ENCODE measurements at regions of chr4 and their contacts with region 1.

Region 1: DNA sequence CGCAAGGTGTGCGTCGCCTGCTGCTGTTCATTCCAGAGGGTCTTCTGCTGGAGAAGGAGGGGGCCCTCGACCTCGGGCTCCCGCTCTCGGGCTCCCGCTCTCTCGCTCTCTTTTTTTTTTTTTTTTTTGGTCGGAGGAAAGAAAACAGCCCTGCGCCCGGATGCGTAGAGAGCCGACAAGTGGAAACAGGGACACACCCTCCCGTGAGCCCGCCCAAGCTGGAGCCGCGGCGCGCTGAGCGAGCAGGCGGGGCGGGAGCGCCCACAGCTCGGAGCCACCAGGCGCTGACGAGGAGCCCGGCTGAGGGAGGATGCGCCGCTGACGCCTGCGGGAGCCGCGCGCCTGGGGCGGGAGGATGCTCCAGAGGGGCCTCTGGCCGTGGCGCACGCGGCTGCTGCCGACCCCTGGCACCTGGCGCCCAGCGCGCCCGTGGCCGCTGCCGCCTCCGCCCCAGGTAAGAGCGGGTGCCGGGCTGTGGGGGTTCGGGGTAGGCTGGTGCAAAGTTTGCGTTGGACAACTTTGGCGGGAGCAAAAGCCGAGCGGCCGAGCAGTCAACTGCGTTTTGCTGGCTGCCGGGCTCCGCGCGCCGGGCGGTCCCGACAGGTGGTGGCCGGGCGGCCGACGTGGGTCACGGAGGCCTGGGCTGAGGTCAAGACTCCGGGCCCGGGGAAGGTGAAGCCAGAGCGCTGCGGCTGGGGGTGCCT is at the start of gene MCUB:
- DNase-seq: peak; percentile 84 to 97 (median 90)
- ATAC-seq: peak; percentile 88
- H3K4me3 ChIP-seq: peak within 1 kb of the TSS; percentile 98
- H3K4me3 Mint-ChIP-seq: peak within 1 kb of the TSS; percentile 94
- H3K27ac ChIP-seq: peak within 1 kb of the TSS; percentile 95 to 96
- H3K27ac Mint-ChIP-seq: peak within 1 kb of the TSS; percentile 93
- H3K4me1 ChIP-seq: peaks cover 43% of the 10 kb centered on the region
- H3K4me1 Mint-ChIP-seq: peaks cover 71% of the 10 kb centered on the region
- H3K27me3 ChIP-seq: no peaks in the 10 kb centered on the region
- H3K27me3 Mint-ChIP-seq: no peaks in the 10 kb centered on the region
- CTCF ChIP-seq: no peak
- total RNA-seq, gene MCUB: 98.1 to 108 TPM

Region 2: DNA sequence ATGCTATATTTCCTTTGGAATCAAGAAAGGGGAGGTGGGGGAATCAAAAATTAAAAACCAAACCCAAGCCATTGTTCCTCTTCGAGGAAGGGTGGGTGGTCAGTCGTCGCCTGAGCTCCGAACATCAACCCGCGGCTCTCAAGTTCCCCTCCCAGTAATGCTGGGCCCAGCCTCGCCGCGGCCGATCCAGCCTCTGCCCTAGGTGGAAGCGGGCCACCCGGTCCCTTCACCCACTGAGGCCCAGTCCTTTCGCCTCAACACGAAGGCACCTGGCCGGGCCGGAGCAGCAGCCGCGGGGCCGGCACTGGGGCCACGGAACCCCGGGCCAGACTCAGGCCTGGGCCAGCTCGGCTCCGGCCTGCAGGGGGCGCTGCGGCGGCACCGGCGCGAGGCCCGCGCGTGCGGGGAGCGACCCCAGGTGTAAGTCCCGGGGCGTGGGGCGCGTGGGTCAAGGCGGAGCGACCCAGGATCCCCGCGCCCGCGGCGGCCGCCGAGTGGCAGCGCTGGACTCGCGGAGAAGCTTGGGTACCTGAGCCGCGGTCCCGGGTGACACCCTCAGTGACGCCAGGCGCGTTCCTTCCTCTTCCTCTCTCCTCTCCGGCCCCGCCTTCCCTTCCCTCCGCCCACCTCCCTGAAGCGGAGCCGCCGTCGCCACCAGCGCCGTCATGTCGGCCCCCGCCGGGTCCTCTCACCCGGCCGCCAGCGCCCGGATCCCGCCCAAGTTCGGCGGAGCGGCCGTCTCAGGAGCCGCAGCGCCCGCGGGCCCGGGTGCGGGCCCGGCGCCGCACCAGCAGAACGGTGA is 126.7 kb before region 1 on chr4 and contains the start of gene SEC24B:
- CTCF ChIA-PET with region 1: interaction called, 19 read pairs
- POLR2A ChIA-PET with region 1: interaction called, 48 read pairs
- intact Hi-C with region 1: loop called (anchors 2 to 5 kb)
- DNase-seq: peak; percentile 78 to 96 (median 88)
- ATAC-seq: peak; percentile 87
- H3K4me3 ChIP-seq: peak within 1 kb of the TSS; percentile 96
- H3K4me3 Mint-ChIP-seq: peak within 1 kb of the TSS; percentile 96
- H3K27ac ChIP-seq: peak within 1 kb of the TSS; percentile 78 to 89
- H3K27ac Mint-ChIP-seq: peak within 1 kb of the TSS; percentile 95
- H3K4me1 ChIP-seq: peaks cover 39% of the 10 kb centered on the region
- H3K4me1 Mint-ChIP-seq: peaks cover 58% of the 10 kb centered on the region
- H3K27me3 ChIP-seq: no peaks in the 10 kb centered on the region
- H3K27me3 Mint-ChIP-seq: no peaks in the 10 kb centered on the region
- CTCF ChIP-seq: peak; percentile 87
- total RNA-seq, gene SEC24B: 41.5 to 45.9 TPM

Region 3: GRCh38 chr4:109574102-109574850 is 14.1 kb after region 1 on chr4:
- CTCF ChIA-PET with region 1: interaction called, 4 read pairs
- POLR2A ChIA-PET with region 1: interaction called, 35 read pairs
- intact Hi-C with region 1: loop called in 1 of 2 experiments (anchors 2 kb)
- DNase-seq: peak in 5 of 14 experiments; percentile 3 to 67 (median 54)
- ATAC-seq: peak; percentile 83
- H3K4me3 ChIP-seq: no peak overlapping the region
- H3K4me3 Mint-ChIP-seq: peak overlapping the region; percentile 63
- H3K27ac ChIP-seq: no peak overlapping the region
- H3K27ac Mint-ChIP-seq: peak overlapping the region; percentile 55
- H3K4me1 ChIP-seq: peaks cover 25% of the 10 kb centered on the region
- H3K4me1 Mint-ChIP-seq: peaks cover 83% of the 10 kb centered on the region
- H3K27me3 ChIP-seq: no peaks in the 10 kb centered on the region
- H3K27me3 Mint-ChIP-seq: no peaks in the 10 kb centered on the region
- CTCF ChIP-seq: peak; percentile 34

Region 4: GRCh38 chr4:109599046-109599652 is 39.0 kb after region 1 on chr4:
- CTCF ChIA-PET with region 1: no interaction called
- POLR2A ChIA-PET with region 1: interaction called, 14 read pairs
- intact Hi-C with region 1: no loop called
- DNase-seq: no peak
- ATAC-seq: peak; percentile 66
- H3K4me3 ChIP-seq: no peak overlapping the region
- H3K4me3 Mint-ChIP-seq: peak overlapping the region; percentile 64
- H3K27ac ChIP-seq: no peak overlapping the region
- H3K27ac Mint-ChIP-seq: peak overlapping the region; percentile 77
- H3K4me1 ChIP-seq: peaks cover 10% of the 10 kb centered on the region
- H3K4me1 Mint-ChIP-seq: peaks cover 59% of the 10 kb centered on the region
- H3K27me3 ChIP-seq: no peaks in the 10 kb centered on the region
- H3K27me3 Mint-ChIP-seq: no peaks in the 10 kb centered on the region
- CTCF ChIP-seq: no peak

Region 5: DNA sequence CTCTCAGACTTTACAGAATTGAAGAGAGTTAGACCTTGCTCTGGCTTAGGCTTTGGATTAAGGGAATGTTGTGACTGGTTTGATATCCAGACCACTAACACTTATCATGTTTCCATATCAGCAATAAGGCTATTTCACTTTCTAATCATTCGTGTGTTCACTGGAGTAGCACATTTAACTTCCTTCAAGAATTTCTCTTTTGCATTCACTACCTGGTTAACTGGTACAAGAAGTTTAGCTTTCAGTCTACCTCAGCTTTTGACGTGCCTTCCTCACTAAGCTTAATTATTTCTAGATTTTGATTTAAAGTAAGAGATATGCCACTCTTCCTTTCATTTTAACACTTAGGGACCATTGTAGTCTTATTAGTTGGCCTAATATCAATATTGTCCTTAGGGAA is 80.5 kb after region 1 on chr4:
- CTCF ChIA-PET with region 1: no interaction called
- POLR2A ChIA-PET with region 1: interaction called, 108 read pairs
- intact Hi-C with region 1: loop called in 1 of 2 experiments (anchors 5 kb)
- DNase-seq: no peak
- ATAC-seq: no peak
- H3K4me3 ChIP-seq: no peak overlapping the region
- H3K4me3 Mint-ChIP-seq: peak overlapping the region; percentile 3
- H3K27ac ChIP-seq: no peak overlapping the region
- H3K27ac Mint-ChIP-seq: peak overlapping the region; percentile 85
- H3K4me1 ChIP-seq: peaks cover 18% of the 10 kb centered on the region
- H3K4me1 Mint-ChIP-seq: peaks cover 57% of the 10 kb centered on the region
- H3K27me3 ChIP-seq: no peaks in the 10 kb centered on the region
- H3K27me3 Mint-ChIP-seq: no peaks in the 10 kb centered on the region
- CTCF ChIP-seq: no peak

Region 6: DNA sequence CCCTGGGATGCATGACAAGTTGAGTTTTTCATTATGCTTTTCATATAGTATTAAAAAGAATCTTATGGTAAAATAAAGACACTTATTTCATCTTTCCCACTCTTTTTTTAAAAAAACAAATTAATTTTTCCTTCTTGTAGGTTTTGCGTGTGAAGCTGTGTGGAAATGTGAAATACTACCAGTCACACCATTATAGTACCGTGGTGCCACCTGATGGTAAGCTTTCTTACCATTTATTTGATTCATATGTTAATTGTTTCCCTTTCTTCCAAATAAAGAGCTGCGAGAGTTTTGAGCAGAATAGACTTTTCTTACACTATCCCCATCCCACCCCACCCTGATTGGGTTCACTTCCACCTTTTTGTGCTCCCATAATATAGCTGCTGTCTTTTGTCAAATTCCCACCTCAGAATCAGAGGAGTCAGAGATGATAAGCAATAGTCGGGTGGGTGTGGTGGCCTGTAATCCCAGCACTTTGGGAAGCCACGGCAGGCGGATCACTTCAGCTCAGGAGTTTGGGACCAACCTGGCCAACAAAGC is 98.8 kb after region 1 on chr4:
- CTCF ChIA-PET with region 1: interaction called, 3 read pairs
- POLR2A ChIA-PET with region 1: interaction called, 29 read pairs
- intact Hi-C with region 1: loop called in 1 of 2 experiments (anchors 5 kb)
- DNase-seq: peak in 5 of 14 experiments; percentile 22 to 59 (median 45)
- ATAC-seq: peak; percentile 78
- H3K4me3 ChIP-seq: no peak overlapping the region
- H3K4me3 Mint-ChIP-seq: no peak overlapping the region
- H3K27ac ChIP-seq: no peak overlapping the region
- H3K27ac Mint-ChIP-seq: no peak overlapping the region
- H3K4me1 ChIP-seq: peaks cover 37% of the 10 kb centered on the region
- H3K4me1 Mint-ChIP-seq: peaks cover 64% of the 10 kb centered on the region
- H3K27me3 ChIP-seq: no peaks in the 10 kb centered on the region
- H3K27me3 Mint-ChIP-seq: no peaks in the 10 kb centered on the region
- CTCF ChIP-seq: peak; percentile 61

Region 7: DNA sequence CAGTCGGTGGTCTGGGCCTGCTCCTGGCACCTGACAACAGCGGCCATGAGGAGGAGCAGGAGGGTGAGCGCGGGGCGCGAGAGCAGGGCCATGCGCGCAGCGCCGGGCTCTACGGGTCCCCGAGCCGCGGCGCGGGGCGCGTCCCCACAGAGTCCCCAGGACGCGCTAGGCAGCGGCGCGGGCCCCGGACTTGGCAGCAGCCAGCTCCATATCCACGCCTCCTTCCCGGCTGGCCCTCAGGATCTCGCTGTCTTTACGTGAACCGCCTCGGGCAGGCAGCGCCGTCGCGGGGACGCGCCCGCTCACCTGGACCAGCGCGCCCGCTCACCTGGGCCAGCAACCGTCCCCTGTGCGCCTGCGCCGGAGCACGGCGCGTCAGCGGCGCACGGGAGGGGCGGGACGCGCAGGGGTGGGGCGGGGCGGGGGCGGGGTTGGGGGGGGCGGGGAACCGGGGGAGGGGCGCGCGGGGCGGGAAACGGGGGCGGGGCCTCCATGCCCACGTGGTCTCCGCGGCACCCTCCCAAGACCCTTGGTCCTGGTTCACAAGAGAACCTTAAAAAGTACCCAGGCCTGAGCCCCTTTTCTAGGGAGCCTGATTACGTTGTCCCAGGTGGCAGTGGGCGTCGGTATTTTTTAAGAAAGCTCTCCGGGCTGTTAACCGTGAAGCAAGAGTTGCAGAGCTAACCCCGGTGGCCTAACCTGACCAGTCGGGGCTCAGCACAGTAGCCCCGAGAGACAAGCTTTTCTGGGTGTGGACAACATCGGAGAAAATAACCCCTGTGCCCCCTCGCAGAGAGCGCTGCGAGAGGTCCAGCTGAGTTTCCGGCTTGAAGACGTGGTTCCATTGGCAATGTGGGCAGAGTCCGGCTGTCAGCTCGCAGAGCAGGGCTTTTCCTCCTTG is 169.8 kb after region 1 on chr4 and contains the start of gene PLA2G12A:
- CTCF ChIA-PET with region 1: no interaction called
- POLR2A ChIA-PET with region 1: interaction called, 8 read pairs
- intact Hi-C with region 1: loop called in 1 of 2 experiments (anchors 2 kb)
- DNase-seq: peak; percentile 66 to 93 (median 80)
- ATAC-seq: peak; percentile 89
- H3K4me3 ChIP-seq: peak within 1 kb of the TSS; percentile 93
- H3K4me3 Mint-ChIP-seq: peak within 1 kb of the TSS; percentile 92
- H3K27ac ChIP-seq: peak within 1 kb of the TSS; percentile 35 to 38
- H3K27ac Mint-ChIP-seq: peak within 1 kb of the TSS; percentile 89
- H3K4me1 ChIP-seq: peaks cover 16% of the 10 kb centered on the region
- H3K4me1 Mint-ChIP-seq: peaks cover 33% of the 10 kb centered on the region
- H3K27me3 ChIP-seq: no peaks in the 10 kb centered on the region
- H3K27me3 Mint-ChIP-seq: no peaks in the 10 kb centered on the region
- CTCF ChIP-seq: no peak
- total RNA-seq, gene PLA2G12A: 9.6 to 10.5 TPM

Measured in CD4-positive, alpha-beta T cell (primary cell).